Endothelial cell of umbilical vein (primary cell): ENCODE measurements at regions of chr12 and their contacts with region 1.

Region 1: GRCh38 chr12:113422030-113422885 is at the start of gene SDSL:
- DNase-seq: peak; percentile 58
- H3K4me3 ChIP-seq: peak within 1 kb of the TSS; percentile 29 to 52 (median 51)
- H3K27ac ChIP-seq: peak within 1 kb of the TSS; percentile 48
- H3K4me1 ChIP-seq: peaks cover 7% of the 10 kb centered on the region
- H3K27me3 ChIP-seq: no peaks in the 10 kb centered on the region
- CTCF ChIP-seq: no peak
- POLR2A ChIP-seq: peak; percentile 53
- total RNA-seq, gene SDSL: 3.7 and 5.7 TPM in 2 replicates

Region 2: GRCh38 chr12:113048716-113049127 is 373.5 kb before region 1 on chr12:
- CTCF ChIA-PET with region 1: no interaction called
- POLR2A ChIA-PET with region 1: no interaction called
- dilution Hi-C with region 1: no loop called
- intact Hi-C with region 1: loop called (anchors 2 kb)
- DNase-seq: peak; percentile 49
- H3K4me3 ChIP-seq: no peak overlapping the region
- H3K27ac ChIP-seq: no peak overlapping the region
- H3K4me1 ChIP-seq: no peaks in the 10 kb centered on the region
- H3K27me3 ChIP-seq: peaks cover 5 to 6% of the 10 kb centered on the region in 2 experiments
- CTCF ChIP-seq: peak; percentile 71 to 79
- POLR2A ChIP-seq: no peak

Region 3: DNA sequence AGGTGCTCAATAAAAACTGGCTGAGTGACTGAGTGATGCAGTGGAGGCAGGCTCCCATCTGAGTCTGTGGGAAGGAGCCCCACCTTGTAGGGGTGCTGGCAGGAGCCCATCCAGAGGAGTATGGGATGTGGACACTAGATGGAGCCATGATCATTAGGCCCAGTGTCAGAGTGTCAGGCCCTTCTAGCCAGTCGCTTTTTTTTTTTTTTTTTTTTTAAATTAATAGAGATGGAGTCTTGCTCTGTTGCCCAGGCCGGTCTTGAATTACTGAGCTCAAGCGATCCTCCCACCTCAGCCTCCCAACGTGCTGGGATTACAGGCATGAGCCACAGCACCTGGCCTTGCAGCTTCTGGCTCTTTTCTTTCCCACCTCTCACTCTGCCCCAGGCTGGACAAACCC is 225.3 kb before region 1 on chr12:
- CTCF ChIA-PET with region 1: interaction called, 22 read pairs
- POLR2A ChIA-PET with region 1: interaction called, 7 read pairs
- dilution Hi-C with region 1: no loop called
- intact Hi-C with region 1: loop called (anchors 1 kb)
- DNase-seq: peak; percentile 82
- H3K4me3 ChIP-seq: no peak overlapping the region
- H3K27ac ChIP-seq: no peak overlapping the region
- H3K4me1 ChIP-seq: peaks cover 23% of the 10 kb centered on the region
- H3K27me3 ChIP-seq: no peaks in the 10 kb centered on the region
- CTCF ChIP-seq: peak; percentile 63 to 81
- POLR2A ChIP-seq: no peak

Region 4: GRCh38 chr12:113334786-113335540 is 87.3 kb before region 1 on chr12 and contains the start of gene SLC8B1:
- CTCF ChIA-PET with region 1: interaction called, 11 read pairs
- POLR2A ChIA-PET with region 1: no interaction called
- dilution Hi-C with region 1: no loop called
- intact Hi-C with region 1: loop called (anchors 1 kb)
- DNase-seq: peak; percentile 75
- H3K4me3 ChIP-seq: peak within 1 kb of the TSS; percentile 70 to 79 (median 78)
- H3K27ac ChIP-seq: peak within 1 kb of the TSS; percentile 30
- H3K4me1 ChIP-seq: peaks cover 18% of the 10 kb centered on the region
- H3K27me3 ChIP-seq: no peaks in the 10 kb centered on the region
- CTCF ChIP-seq: no peak
- POLR2A ChIP-seq: peak; percentile 83
- total RNA-seq, gene SLC8B1: 28.4 and 29.9 TPM in 2 replicates

Region 5: GRCh38 chr12:113403435-113404415 is 18.5 kb before region 1 on chr12 and contains the start of gene SDS:
- CTCF ChIA-PET with region 1: interaction called, 42 read pairs
- POLR2A ChIA-PET with region 1: no interaction called
- dilution Hi-C with region 1: no loop called
- intact Hi-C with region 1: no loop called
- DNase-seq: peak; percentile 43
- H3K4me3 ChIP-seq: no peak within 1 kb of the TSS
- H3K27ac ChIP-seq: no peak within 1 kb of the TSS
- H3K4me1 ChIP-seq: no peaks in the 10 kb centered on the region
- H3K27me3 ChIP-seq: peaks cover 0 to 3% of the 10 kb centered on the region in 2 experiments
- CTCF ChIP-seq: no peak
- POLR2A ChIP-seq: no peak
- total RNA-seq, gene SDS: not detected in 2 replicates

Region 6: GRCh38 chr12:113439606-113440030 is 17.4 kb after region 1 on chr12:
- CTCF ChIA-PET with region 1: interaction called, 31 read pairs
- POLR2A ChIA-PET with region 1: no interaction called
- dilution Hi-C with region 1: no loop called
- intact Hi-C with region 1: no loop called
- DNase-seq: peak; percentile 44
- H3K4me3 ChIP-seq: no peak overlapping the region
- H3K27ac ChIP-seq: no peak overlapping the region
- H3K4me1 ChIP-seq: no peaks in the 10 kb centered on the region
- H3K27me3 ChIP-seq: peaks cover 0 to 2% of the 10 kb centered on the region in 2 experiments
- CTCF ChIP-seq: peak; percentile 68 to 80
- POLR2A ChIP-seq: no peak

Region 7: GRCh38 chr12:113453330-113453729 is 31.1 kb after region 1 on chr12:
- CTCF ChIA-PET with region 1: interaction called, 17 read pairs
- POLR2A ChIA-PET with region 1: no interaction called
- dilution Hi-C with region 1: no loop called
- intact Hi-C with region 1: no loop called
- DNase-seq: no peak
- H3K4me3 ChIP-seq: no peak overlapping the region
- H3K27ac ChIP-seq: no peak overlapping the region
- H3K4me1 ChIP-seq: no peaks in the 10 kb centered on the region
- H3K27me3 ChIP-seq: peaks cover 0 to 2% of the 10 kb centered on the region in 2 experiments
- CTCF ChIP-seq: no peak
- POLR2A ChIP-seq: no peak

Region 8: GRCh38 chr12:114054982-114055381 is 632.7 kb after region 1 on chr12:
- CTCF ChIA-PET with region 1: no interaction called
- POLR2A ChIA-PET with region 1: no interaction called
- dilution Hi-C with region 1: no loop called
- intact Hi-C with region 1: no loop called
- DNase-seq: no peak
- H3K4me3 ChIP-seq: no peak overlapping the region
- H3K27ac ChIP-seq: no peak overlapping the region
- H3K4me1 ChIP-seq: no peaks in the 10 kb centered on the region
- H3K27me3 ChIP-seq: no peaks in the 10 kb centered on the region
- CTCF ChIP-seq: no peak
- POLR2A ChIP-seq: no peak